ENCODE measurements at regions of chr7 and their contacts with region 1.

Region 1: DNA sequence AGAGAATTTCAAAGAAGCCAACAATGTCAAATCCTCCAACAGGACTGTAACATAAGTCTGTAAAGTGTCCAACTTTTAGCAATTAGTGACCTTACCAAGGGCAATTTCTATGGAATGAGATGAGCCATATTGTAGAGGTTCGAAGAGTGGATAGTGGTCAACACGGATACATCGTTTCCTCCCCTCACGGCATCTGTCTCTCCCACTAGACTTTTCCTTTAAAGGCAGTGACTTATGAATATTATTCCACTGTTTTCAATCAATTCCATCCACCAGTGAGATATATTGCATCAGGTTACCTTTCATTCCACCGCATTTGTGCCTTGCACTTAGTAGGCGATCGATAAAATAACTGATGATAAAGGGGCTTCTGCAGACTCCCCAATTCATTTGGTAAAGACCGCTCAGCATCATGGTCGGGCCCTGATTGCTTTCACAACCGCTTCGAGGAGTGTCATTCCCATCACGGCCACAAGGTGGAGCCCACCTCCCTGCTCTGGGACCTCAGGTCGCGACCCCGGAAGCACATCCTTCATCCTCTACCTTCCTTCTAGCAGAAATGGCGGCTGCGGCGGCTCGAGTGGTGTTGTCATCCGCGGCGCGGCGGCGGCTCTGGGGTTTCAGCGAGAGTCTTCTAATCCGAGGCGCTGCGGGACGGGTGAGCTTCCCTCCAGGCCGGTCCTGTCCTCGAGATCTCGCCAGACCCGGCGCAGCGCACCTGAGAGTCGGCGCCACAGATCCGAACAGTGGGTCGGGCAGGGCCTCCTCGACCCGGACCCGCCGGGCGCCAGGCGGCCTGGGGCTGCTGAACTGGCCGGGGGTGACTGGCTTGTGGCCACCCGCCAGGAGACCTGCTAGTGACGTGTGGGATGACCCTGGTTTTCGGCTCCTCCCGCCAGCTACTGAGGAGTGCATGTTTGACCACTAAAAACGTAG is at the start of gene PMPCB:
- DNase-seq: peak; percentile 93 to 99 (median 98)

Region 2: GRCh38 chr7:103344453-103345149 is 47.4 kb after region 1 on chr7 and contains the start of gene DNAJC2:
- intact Hi-C with region 1: loop called (anchors 5 kb)
- DNase-seq: peak; percentile 77 to 98 (median 84)

Region 3: DNA sequence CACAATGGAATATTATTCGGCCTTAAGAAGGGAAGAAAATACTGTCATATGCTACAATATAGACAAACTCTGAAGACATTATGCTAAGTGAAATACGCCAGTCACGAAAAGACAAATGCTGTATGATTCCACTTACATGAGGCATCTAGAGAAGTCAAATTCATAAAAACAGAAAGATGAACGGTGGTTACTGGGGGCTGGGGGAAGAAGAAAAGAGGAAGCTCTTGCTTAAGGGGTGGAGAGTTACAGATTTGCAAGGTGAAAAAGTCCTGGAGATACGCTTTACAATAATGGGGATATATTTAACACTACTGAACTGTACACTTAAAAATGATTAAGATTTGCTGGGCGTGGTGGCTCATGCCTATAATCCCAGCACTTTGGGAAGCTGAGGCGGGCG is 99.3 kb after region 1 on chr7:
- intact Hi-C with region 1: loop called (anchors 10 kb)
- DNase-seq: no peak

Region 4: DNA sequence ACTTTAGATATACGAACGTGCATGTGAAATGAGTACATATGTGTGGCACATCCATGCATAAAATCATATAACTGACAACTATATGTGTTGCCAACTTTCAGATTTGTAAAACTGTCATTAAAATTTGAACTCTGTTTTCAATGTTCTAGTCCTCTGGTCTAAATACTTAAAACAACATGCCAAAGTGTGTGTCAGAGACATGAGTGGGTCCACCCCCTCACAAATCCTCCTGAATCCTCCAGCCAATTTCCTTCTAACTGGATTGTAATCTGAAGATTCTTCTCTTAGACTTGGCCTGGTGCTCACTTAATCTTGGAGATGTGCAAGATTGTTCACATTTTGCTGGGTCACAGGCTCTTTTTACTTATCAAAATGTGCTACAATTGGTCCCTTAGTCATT is 508.2 kb after region 1 on chr7:
- intact Hi-C with region 1: no loop called
- DNase-seq: no peak

Region 5: GRCh38 chr7:104299323-104299722 is 1002.2 kb after region 1 on chr7:
- intact Hi-C with region 1: no loop called
- DNase-seq: no peak